ENCODE measurements at regions of chr4 and their contacts with region 1.

Region 1: GRCh38 chr4:174764105-174764729 is 64.8 kb downstream of the GLRA3 start:
- DNase-seq: peak; percentile 59
- H3K4me3 Mint-ChIP-seq: no peak overlapping the region
- H3K27ac Mint-ChIP-seq: no peak overlapping the region
- H3K4me1 Mint-ChIP-seq: no peaks in the 10 kb centered on the region
- H3K27me3 Mint-ChIP-seq: no peaks in the 10 kb centered on the region
- CTCF ChIP-seq: peak; percentile 56

Region 2: GRCh38 chr4:174749091-174749490 is 15.1 kb before region 1 on chr4:
- CTCF ChIA-PET with region 1: interaction called, 11 read pairs
- POLR2A ChIA-PET with region 1: no interaction called
- intact Hi-C with region 1: no loop called
- DNase-seq: peak; percentile 34
- H3K4me3 Mint-ChIP-seq: no peak overlapping the region
- H3K27ac Mint-ChIP-seq: no peak overlapping the region
- H3K4me1 Mint-ChIP-seq: no peaks in the 10 kb centered on the region
- H3K27me3 Mint-ChIP-seq: no peaks in the 10 kb centered on the region
- CTCF ChIP-seq: no peak

Region 3: DNA sequence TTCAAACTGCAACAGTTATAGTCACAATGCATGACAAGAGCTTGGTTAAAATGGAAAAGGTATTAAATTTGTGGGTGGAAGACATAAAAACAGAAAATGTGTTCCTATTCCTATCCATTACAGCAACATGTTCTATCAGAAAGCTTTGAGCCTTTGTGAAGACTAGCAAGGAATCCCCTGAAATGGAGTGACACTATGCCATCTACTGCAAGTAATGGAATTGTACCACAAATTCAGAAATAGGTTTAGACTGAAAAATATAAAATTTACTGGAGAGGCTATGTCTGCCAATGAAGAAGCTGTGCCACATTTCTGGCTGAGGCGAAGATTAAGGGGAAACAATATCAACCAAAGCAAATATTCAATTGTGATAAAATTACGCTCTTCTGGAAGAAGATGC is 401.8 kb after region 1 on chr4:
- CTCF ChIA-PET with region 1: interaction called, 4 read pairs
- POLR2A ChIA-PET with region 1: no interaction called
- intact Hi-C with region 1: loop called (anchors 5 kb)
- DNase-seq: peak; percentile 17
- H3K4me3 Mint-ChIP-seq: no peak overlapping the region
- H3K27ac Mint-ChIP-seq: no peak overlapping the region
- H3K4me1 Mint-ChIP-seq: no peaks in the 10 kb centered on the region
- H3K27me3 Mint-ChIP-seq: no peaks in the 10 kb centered on the region
- CTCF ChIP-seq: no peak

Region 4: GRCh38 chr4:175253184-175253902 is 489.1 kb after region 1 on chr4:
- CTCF ChIA-PET with region 1: interaction called, 3 read pairs
- POLR2A ChIA-PET with region 1: no interaction called
- intact Hi-C with region 1: loop called (anchors 1 kb)
- DNase-seq: peak; percentile 56
- H3K4me3 Mint-ChIP-seq: no peak overlapping the region
- H3K27ac Mint-ChIP-seq: no peak overlapping the region
- H3K4me1 Mint-ChIP-seq: no peaks in the 10 kb centered on the region
- H3K27me3 Mint-ChIP-seq: no peaks in the 10 kb centered on the region
- CTCF ChIP-seq: peak; percentile 35

Region 5: DNA sequence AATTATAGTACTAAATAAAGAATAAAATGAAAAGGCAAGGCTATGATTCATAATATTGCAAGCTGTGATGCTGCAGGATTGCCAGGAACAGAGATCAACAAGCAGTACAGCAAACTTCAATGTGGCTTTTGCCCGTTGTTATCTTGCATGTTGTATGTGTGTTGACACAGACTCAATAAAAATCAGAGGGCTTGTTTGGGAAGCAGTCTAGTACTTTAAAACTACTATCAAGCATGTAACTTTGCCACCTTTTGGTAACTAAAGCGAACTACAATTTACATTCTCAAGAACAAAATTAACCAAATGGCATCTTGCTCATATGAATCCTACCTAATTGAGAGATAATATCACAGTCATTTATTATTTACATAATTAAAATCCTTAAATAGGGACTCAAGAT is 1127.6 kb after region 1 on chr4:
- CTCF ChIA-PET with region 1: no interaction called
- POLR2A ChIA-PET with region 1: no interaction called
- intact Hi-C with region 1: loop called (anchors 2 kb)
- DNase-seq: peak; percentile 49
- H3K4me3 Mint-ChIP-seq: no peak overlapping the region
- H3K27ac Mint-ChIP-seq: no peak overlapping the region
- H3K4me1 Mint-ChIP-seq: peaks cover 6% of the 10 kb centered on the region
- H3K27me3 Mint-ChIP-seq: no peaks in the 10 kb centered on the region
- CTCF ChIP-seq: peak; percentile 42

Measured in MCF 10A (cell line).